Sigmoid colon (tissue), 7 donors: ENCODE measurements at regions of chr9 and their contacts with region 1.

Region 1: DNA sequence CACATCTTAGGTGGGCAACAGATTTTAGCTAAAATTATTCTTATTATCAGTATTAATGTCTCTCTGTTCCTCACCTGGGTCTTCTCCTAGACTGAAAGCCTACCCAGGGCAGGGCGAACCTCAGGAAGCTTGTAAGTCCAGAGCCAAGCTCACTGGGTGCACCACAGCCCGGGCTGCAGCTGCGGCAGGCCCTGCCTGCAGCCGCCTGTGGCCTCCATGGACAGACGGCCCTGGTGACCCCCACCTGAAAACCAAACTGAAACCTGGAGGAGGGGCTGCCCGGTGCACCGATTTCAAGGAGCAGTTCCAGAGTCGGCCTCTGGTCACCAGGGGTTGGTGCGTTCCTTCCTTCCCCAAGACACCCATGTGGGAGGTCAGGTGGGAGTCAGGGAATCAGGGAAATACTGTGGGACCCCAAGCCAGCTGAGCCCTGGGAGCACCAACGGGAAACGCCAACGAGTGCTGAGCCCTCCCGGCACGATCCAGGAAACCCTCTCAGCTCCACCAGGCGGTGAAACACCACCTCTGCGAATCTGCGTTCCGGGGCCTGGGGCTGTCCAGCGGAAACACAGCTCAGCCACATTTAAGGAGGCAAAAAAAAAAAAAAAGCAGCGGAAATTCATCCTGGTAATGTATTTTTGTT is 68.6 kb upstream of the PPP1R26 start:
- DNase-seq: no peak
- H3K4me3 ChIP-seq: no peak overlapping the region
- H3K27ac ChIP-seq: no peak overlapping the region
- H3K4me1 ChIP-seq: no peaks in the 10 kb centered on the region
- H3K27me3 ChIP-seq: peaks cover 0 to 46% (median 11%) of the 10 kb centered on the region in 3 donors
- CTCF ChIP-seq: no peak
- EP300 ChIP-seq: no peak
- POLR2A ChIP-seq: no peak

Region 2: DNA sequence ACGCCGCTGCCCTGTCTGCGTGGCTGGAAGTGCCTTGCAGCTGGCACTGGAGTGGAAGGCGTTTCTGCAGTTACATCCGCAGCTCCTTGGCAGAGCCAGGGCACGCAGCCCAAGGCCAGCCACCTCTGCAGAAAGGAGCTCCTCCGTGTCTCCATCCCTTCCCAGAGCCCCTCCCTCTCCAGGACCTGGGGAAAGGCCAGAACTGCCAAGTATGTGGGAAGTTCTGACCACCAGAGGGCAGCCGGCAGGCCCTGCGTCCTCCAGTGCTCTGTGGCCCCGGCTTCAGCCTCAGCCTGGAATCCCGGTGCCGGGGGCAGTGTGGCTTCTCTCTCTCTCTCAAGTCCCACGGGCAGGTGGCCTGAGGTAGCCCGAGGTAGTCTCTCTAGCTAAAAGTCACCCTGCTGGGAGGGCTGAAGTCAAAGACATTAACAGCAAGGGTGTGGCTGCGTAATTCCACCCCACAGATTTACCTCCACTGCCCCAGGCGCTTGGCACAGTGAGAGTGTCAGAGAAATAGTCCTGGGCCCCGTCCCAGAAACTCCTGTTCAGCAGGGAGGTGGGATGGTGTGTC is 632.0 kb before region 1 on chr9:
- intact Hi-C with region 1: loop called (anchors 5 kb)
- DNase-seq: peak; percentile 89
- H3K4me3 ChIP-seq: no peak overlapping the region
- H3K27ac ChIP-seq: peak overlapping the region; percentile 10 to 76 (median 60)
- H3K4me1 ChIP-seq: peaks cover 0 to 57% (median 49%) of the 10 kb centered on the region in 4 donors
- H3K27me3 ChIP-seq: no peaks in the 10 kb centered on the region
- CTCF ChIP-seq: peak; percentile 45 to 75 (median 68)
- EP300 ChIP-seq: no peak
- POLR2A ChIP-seq: no peak

Region 3: GRCh38 chr9:135085830-135086546 is 325.0 kb before region 1 on chr9:
- intact Hi-C with region 1: loop called (anchors 1 kb)
- DNase-seq: peak; percentile 89
- H3K4me3 ChIP-seq: peak overlapping the region in 3 of 4 donors; percentile 18 to 51 (median 50)
- H3K27ac ChIP-seq: peak overlapping the region in 1 of 4 donors; percentile 24
- H3K4me1 ChIP-seq: peaks cover 0 to 35% (median 31%) of the 10 kb centered on the region in 4 donors
- H3K27me3 ChIP-seq: peaks cover 22 to 46% (median 28%) of the 10 kb centered on the region in 3 donors
- CTCF ChIP-seq: peak; percentile 86 to 95 (median 93)
- EP300 ChIP-seq: no peak
- POLR2A ChIP-seq: no peak

Region 4: GRCh38 chr9:135221951-135222631 is 188.9 kb before region 1 on chr9:
- intact Hi-C with region 1: no loop called
- DNase-seq: peak; percentile 50
- H3K4me3 ChIP-seq: no peak overlapping the region
- H3K27ac ChIP-seq: no peak overlapping the region
- H3K4me1 ChIP-seq: peaks cover 0 to 10% (median 2%) of the 10 kb centered on the region in 4 donors
- H3K27me3 ChIP-seq: peaks cover 12 to 72% (median 41%) of the 10 kb centered on the region in 3 donors
- CTCF ChIP-seq: no peak
- EP300 ChIP-seq: no peak
- POLR2A ChIP-seq: no peak

Region 5: DNA sequence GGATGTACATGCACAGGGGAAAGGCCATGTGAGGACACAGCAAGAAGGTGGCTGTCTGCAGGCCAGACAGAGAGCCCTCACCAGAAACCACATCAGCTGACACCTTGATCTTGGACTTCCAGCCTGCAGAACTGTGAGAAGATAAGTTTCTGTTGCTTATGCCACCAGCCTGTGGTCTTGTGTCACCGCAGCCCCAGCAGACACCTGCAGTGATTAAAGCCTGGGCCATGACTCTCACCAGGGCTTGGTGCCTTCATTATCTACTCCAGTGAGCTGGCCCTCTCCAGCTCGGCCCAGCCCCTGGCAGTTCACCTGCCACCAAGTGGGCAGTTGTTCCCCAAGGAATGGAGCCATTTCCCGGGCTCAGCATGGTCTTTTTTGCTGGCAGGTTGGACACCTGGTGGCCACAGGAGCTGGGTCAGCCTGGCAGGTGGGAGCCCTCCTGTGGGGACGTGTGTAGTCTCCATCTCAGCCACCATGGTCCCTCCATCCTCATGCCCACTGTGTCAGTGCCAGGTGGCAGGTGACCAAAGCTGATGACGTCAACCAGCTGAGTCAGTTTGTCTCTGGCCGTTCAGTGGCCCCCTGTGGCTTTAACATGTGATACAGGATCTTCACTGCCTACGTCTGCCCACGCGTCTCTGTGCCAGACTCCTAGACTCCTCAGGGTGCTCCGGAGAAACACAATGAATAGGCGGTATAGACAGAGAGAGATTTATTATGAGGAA is 31.2 kb before region 1 on chr9:
- intact Hi-C with region 1: no loop called
- DNase-seq: no peak
- H3K4me3 ChIP-seq: no peak overlapping the region
- H3K27ac ChIP-seq: no peak overlapping the region
- H3K4me1 ChIP-seq: no peaks in the 10 kb centered on the region
- H3K27me3 ChIP-seq: peaks cover 0 to 39% (median 0%) of the 10 kb centered on the region in 3 donors
- CTCF ChIP-seq: no peak
- EP300 ChIP-seq: no peak
- POLR2A ChIP-seq: no peak